ENCODE measurements at regions of chr11 and their contacts with region 1.

Region 1: GRCh38 chr11:100585728-100586127 is 101.4 kb upstream of the ARHGAP42 start:
- DNase-seq: no peak
- ATAC-seq: peak; percentile 93

Region 2: GRCh38 chr11:100753172-100753543 is 167.4 kb after region 1 on chr11:
- intact Hi-C with region 1: no loop called
- DNase-seq: no peak
- ATAC-seq: peak; percentile 29

Region 3: GRCh38 chr11:102244681-102245409 is 1659.1 kb after region 1 on chr11:
- intact Hi-C with region 1: loop called (anchors 5 kb)
- DNase-seq: no peak
- ATAC-seq: no peak